PC-3 (cell line): ENCODE measurements at regions of chr12 and their contacts with region 1.

Region 1: DNA sequence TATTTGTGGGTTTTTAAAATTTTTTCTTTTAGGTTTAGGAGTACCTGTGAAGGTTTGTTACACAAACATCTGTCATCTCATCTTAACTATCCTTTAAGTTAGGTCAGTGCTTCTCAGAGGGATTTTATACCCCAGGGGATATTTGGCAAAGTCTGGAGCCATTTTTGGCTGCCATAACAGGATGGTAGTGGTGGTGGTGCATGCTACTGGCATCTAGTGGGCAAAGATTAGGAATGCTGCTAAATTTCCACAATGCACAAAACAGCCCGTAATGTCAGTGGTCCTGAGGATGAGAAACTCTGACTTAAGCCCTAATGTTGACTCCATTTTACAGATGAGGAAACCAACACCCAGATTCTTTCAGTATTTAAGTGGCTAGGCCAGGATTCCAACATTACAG is 85.2 kb upstream of the MYF6 start:
- DNase-seq: peak; percentile 42
- ATAC-seq: no peak; the same call in 1 of the 2 replicates
- H3K4me3 ChIP-seq: no peak overlapping the region
- H3K27ac ChIP-seq: no peak overlapping the region
- H3K4me1 ChIP-seq: no peaks in the 10 kb centered on the region
- H3K27me3 ChIP-seq: no peaks in the 10 kb centered on the region
- CTCF ChIP-seq: peak; percentile 66

Region 2: GRCh38 chr12:80443636-80444317 is 178.5 kb before region 1 on chr12 and contains the start of gene PTPRQ:
- CTCF ChIA-PET with region 1: no interaction called
- POLR2A ChIA-PET with region 1: interaction called, 11 read pairs
- intact Hi-C with region 1: no loop called
- DNase-seq: no peak
- ATAC-seq: no peak
- H3K4me3 ChIP-seq: no peak within 1 kb of the TSS
- H3K27ac ChIP-seq: no peak within 1 kb of the TSS
- H3K4me1 ChIP-seq: peaks cover 4% of the 10 kb centered on the region; the same call in 1 of the 2 replicates
- H3K27me3 ChIP-seq: no peaks in the 10 kb centered on the region
- CTCF ChIP-seq: no peak
- total RNA-seq, gene PTPRQ: 0.07 TPM in 1 of 2 replicates, not detected in the other

Region 3: DNA sequence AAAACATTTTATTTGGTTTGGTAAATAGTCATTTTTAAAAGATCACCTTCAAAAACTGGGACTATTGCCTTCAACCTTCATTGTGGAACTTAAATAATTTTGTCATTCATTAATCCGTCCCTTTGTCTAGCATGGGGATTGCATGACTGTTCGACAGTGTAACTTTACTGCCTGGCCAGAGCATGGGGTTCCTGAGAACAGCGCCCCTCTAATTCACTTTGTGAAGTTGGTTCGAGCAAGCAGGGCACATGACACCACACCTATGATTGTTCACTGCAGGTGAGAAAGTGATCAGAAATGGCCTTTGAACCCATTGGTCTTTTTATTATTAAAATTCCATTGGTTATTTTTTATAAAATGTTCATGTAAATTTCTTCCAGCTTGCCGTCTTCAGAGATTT is 47.9 kb after region 1 on chr12:
- CTCF ChIA-PET with region 1: no interaction called
- POLR2A ChIA-PET with region 1: no interaction called
- intact Hi-C with region 1: no loop called
- DNase-seq: no peak
- ATAC-seq: no peak
- H3K4me3 ChIP-seq: no peak overlapping the region
- H3K27ac ChIP-seq: no peak overlapping the region
- H3K4me1 ChIP-seq: no peaks in the 10 kb centered on the region
- H3K27me3 ChIP-seq: peaks cover 5% of the 10 kb centered on the region; the same call in 1 of the 2 replicates
- CTCF ChIP-seq: no peak